ENCODE measurements at regions of chr2 and their contacts with region 1.

Region 1: DNA sequence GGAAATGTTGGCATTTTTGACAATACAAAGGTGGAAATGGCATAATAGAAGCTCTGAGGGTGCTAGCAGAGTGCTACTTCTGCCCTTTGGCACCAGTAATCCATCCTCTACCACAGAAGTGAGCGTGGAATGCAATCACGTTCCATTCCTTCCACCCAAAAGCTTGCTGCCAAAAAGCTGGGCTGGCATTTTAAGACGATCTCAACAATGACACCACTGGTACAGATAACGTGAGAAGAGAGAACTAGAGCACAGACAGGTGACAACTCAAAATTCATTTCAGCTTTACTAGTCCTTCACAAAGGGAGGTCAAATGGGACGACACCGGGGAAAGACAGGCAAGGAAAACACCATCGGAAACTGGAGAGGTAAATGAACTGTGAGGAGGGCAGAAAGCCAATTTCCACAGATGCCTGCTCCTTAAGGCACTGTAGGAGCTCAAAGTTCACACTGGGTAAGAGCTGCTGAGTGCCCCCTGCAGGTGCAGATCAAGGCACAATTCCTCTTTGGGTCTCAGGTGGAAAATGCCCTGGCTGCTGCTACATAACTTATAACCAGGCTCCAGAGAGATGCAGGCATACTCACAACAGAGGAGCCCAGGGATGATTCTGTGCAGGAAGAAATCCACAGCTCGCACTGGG is 50.7 kb upstream of the RNU4ATAC start:
- DNase-seq: peak in 1 of 2 experiments; percentile 58
- H3K4me3 ChIP-seq: no peak overlapping the region
- H3K27ac ChIP-seq: no peak overlapping the region; the same call in 1 of the 2 replicates
- H3K4me1 ChIP-seq: peaks cover 0 to 6% (median 2%) of the 10 kb centered on the region in 4 experiments; a peak in 3 of 7 replicates
- H3K27me3 ChIP-seq: no peaks in the 10 kb centered on the region
- CTCF ChIP-seq: peak; percentile 39 to 76 (median 64)
- EP300 ChIP-seq: no peak
- POLR2A ChIP-seq: no peak
- RAD21 ChIP-seq: peak; percentile 30 to 53

Region 2: GRCh38 chr2:121175326-121175725 is 304.7 kb before region 1 on chr2:
- CTCF ChIA-PET with region 1: no interaction called
- POLR2A ChIA-PET with region 1: no interaction called
- DNase-seq: peak in 1 of 2 experiments; percentile 10
- H3K4me3 ChIP-seq: no peak overlapping the region
- H3K27ac ChIP-seq: no peak overlapping the region
- H3K4me1 ChIP-seq: no peaks in the 10 kb centered on the region; a peak in 1 of 7 replicates
- H3K27me3 ChIP-seq: no peaks in the 10 kb centered on the region; a peak in 3 of 7 replicates
- CTCF ChIP-seq: no peak
- EP300 ChIP-seq: no peak
- POLR2A ChIP-seq: no peak
- RAD21 ChIP-seq: peak in 1 of 2 experiments; percentile 33; a peak in 2 of 4 replicates

Region 3: DNA sequence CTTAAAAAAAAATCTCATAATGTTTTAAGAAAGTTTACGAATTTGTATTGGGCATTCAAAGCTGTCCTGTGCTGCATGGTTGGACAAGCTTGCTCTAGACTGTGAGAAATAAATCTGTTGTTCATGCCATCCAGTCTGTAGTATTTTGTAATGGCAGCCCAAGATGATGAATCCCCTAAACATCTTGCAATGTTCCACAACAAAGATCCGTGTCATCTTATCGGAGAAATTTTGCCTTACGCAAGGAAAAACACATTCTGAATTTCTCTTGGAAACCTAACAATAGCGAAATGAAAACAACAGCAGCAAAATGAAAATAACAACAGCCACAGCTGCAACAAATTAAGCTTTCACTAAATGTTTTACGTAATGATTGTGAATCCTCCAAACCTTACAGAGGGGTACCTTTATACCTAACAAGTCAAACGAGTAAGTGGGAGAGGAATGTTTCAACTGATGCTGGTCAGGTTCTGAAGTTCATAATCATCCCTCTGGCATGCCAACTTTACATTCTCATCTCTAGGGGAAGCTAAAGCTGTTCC is 25.4 kb before region 1 on chr2:
- CTCF ChIA-PET with region 1: interaction called, 10 read pairs
- POLR2A ChIA-PET with region 1: no interaction called
- DNase-seq: no peak
- H3K4me3 ChIP-seq: no peak overlapping the region
- H3K27ac ChIP-seq: no peak overlapping the region
- H3K4me1 ChIP-seq: no peaks in the 10 kb centered on the region
- H3K27me3 ChIP-seq: no peaks in the 10 kb centered on the region
- CTCF ChIP-seq: no peak
- EP300 ChIP-seq: no peak
- POLR2A ChIP-seq: no peak
- RAD21 ChIP-seq: no peak

Measured in H1 (cell line).